Transverse colon (tissue), 4 donors: ENCODE measurements at regions of chr16 and their contacts with region 1.

Region 1: DNA sequence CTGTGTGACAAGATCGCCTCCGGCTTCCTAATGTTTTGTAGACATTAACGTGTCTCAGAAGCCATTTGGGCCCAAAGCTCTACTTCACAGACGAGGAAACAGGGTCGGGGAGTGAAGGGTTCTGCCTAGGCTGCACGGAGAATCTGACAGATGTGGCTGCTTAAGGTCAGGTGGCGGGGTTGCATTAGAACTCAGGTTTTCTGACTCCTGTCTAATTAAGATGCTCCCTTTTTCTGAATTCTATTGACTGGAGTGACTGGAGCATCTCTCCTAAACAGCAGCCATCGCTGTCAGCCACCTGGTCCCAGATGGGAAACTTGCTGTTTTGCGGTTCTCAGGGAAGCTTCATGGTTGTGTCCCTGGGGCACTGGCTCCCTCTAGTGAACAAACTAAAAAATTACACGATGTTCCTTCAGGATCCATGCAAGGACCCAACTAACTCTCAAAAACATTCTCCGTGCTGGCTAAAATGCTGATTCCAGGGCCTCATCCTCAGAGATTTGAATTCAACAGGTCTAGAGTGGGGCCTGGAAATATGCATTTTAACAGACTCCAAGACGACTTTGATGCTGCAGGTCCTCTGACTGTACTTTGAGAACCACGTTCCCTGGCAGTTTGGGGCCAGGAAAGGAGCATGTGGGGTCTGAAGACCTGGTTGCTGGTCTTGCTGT is 117.4 kb downstream of the IRF8 start:
- DNase-seq: peak; percentile 39
- H3K4me3 ChIP-seq: no peak overlapping the region
- H3K27ac ChIP-seq: no peak overlapping the region
- H3K4me1 ChIP-seq: peaks cover 0 to 12% (median 3%) of the 10 kb centered on the region in 4 donors
- H3K27me3 ChIP-seq: no peaks in the 10 kb centered on the region
- CTCF ChIP-seq: peak; percentile 80 to 84 (median 81)
- EP300 ChIP-seq: no peak
- POLR2A ChIP-seq: no peak

Region 2: GRCh38 chr16:85253084-85253941 is 763.0 kb before region 1 on chr16:
- in situ Hi-C with region 1: loop called in 1 of 4 experiments (anchors 25 kb)
- intact Hi-C with region 1: no loop called
- DNase-seq: peak; percentile 55
- H3K4me3 ChIP-seq: no peak overlapping the region
- H3K27ac ChIP-seq: no peak overlapping the region
- H3K4me1 ChIP-seq: no peaks in the 10 kb centered on the region
- H3K27me3 ChIP-seq: no peaks in the 10 kb centered on the region
- CTCF ChIP-seq: peak; percentile 75 to 96 (median 94)
- EP300 ChIP-seq: no peak
- POLR2A ChIP-seq: no peak